Ovary (tissue), 10 donors: ENCODE measurements at regions of chr17 and their contacts with region 1.

Region 1: DNA sequence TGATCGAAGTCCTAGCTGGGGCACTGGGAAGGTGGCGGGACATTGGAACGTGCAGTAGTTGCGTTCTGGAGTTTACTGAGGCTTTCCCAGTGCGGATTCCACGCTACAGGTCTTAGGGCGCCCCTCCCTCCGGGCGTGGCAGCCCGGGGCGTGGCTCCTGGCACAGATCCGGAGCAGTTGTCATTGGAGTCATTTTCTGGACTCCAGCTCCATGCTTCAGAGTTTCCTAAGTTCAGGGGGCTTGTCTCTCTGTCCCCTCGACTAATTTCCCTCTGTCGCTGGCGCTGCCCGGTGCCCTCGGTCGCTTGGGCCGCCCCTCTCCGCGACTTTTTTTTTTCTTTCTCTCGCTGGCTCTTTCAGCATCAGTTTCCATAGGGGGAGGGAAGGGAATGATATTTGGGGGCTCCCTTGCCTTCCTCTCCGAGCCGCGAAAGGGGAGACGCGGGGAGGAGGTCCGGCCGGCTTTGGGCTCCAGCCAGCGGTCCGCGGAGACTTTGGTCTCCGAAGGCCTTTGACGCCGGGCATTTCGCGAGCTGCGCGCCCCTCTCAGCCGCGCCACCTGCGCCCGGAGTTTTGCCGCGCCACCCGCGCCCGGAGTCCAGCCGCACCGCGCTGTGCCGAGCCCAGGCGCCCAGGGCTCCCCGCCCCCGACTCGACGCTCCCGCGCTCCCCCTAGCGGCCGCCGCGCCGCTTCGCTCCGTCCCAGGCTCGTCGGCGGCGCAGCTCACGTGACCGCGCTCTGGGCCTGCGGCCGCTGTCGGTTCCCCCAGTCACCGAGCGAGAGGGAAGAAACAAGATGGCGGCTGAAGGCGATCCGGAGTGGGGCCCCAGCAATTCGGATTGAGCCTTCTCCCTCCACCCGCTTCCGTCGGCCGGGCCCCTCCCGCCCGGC is at the start of gene BPTF:
- DNase-seq: peak; percentile 91 to 95 (median 92)
- H3K4me3 ChIP-seq: peak within 1 kb of the TSS; percentile 65
- H3K27ac ChIP-seq: peak within 1 kb of the TSS; percentile 92 to 99
- H3K4me1 ChIP-seq: peaks cover 2% of the 10 kb centered on the region
- H3K27me3 ChIP-seq: no peaks in the 10 kb centered on the region
- CTCF ChIP-seq: peak; percentile 96 to 99 (median 98)
- EP300 ChIP-seq: no peak
- POLR2A ChIP-seq: peak; percentile 41
- total RNA-seq, gene BPTF: 58.9 to 120 (median 93.8) TPM

Region 2: DNA sequence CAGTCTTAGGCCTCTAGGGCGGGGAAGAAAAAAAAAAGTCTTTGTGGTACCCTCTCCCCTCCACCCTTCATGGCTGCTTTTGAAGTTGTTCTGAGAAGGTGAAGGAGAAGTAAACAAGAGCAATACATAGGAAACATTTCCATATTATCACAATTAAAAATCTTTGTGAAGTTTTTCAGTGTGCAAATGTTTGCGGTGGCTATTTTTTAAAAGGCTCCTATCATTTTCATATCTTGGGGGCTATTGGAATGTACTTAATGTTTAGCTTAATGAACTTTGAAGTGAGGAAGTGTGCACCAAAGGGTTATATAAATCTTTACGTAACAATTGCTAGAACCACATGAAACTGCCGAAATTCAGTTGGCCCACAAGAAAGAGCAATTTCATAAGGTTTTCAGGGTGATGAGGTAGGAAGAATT is 99.6 kb before region 1 on chr17:
- intact Hi-C with region 1: loop called in 2 of 4 experiments (anchors 10 kb)
- DNase-seq: no peak
- H3K4me3 ChIP-seq: no peak overlapping the region
- H3K27ac ChIP-seq: no peak overlapping the region
- H3K4me1 ChIP-seq: no peaks in the 10 kb centered on the region
- H3K27me3 ChIP-seq: no peaks in the 10 kb centered on the region
- CTCF ChIP-seq: no peak
- EP300 ChIP-seq: no peak
- POLR2A ChIP-seq: no peak